ENCODE measurements at regions of chr19 and their contacts with region 1.

Region 1: GRCh38 chr19:38559428-38560401 is 58.0 kb downstream of the MAP4K1 start:
- H3K4me3 Mint-ChIP-seq: no peak overlapping the region
- H3K27ac Mint-ChIP-seq: no peak overlapping the region
- H3K4me1 Mint-ChIP-seq: peaks cover 44% of the 10 kb centered on the region
- H3K27me3 Mint-ChIP-seq: peaks cover 25% of the 10 kb centered on the region

Region 2: GRCh38 chr19:38618590-38619360 is 59.1 kb after region 1 on chr19 and contains the start of gene EIF3K:
- intact Hi-C with region 1: loop called (anchors 10 kb)
- H3K4me3 Mint-ChIP-seq: peak within 1 kb of the TSS; percentile 100
- H3K27ac Mint-ChIP-seq: peak within 1 kb of the TSS; percentile 99
- H3K4me1 Mint-ChIP-seq: peaks cover 46% of the 10 kb centered on the region
- H3K27me3 Mint-ChIP-seq: no peaks in the 10 kb centered on the region